Sciatic nerve (tissue), 2 donors: ENCODE measurements at regions of chr2 and their contacts with region 1.

Region 1: DNA sequence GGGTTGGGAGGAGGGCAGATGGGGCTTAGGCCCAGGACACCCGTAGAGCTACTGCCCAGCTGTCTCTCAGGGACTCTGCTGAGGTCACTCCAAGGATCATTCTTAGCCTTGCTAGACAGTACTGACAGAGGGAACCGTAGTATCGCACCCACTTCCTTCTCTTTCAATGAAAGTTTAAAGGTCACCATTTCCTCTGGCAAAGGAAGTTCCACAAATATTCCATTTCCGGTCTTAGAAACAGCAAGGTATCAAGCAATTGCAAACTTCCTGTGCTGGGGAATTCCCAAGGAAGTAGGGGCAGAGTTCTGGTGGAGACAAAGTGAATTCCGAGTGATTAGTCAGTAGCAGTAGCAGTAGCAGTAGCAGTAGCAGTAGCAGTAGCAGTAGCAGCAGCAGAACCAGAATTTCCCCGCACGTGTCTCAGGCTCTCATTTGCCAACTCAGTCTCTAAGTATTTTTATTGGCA is 24.7 kb downstream of the IL1B start:
- DNase-seq: no peak
- ATAC-seq: peak; percentile 45

Region 2: GRCh38 chr2:112782234-112782799 is 29.6 kb before region 1 on chr2:
- intact Hi-C with region 1: loop called (anchors 1 kb)
- DNase-seq: no peak
- ATAC-seq: no peak

Region 3: GRCh38 chr2:113848758-113849415 is 1037.0 kb after region 1 on chr2:
- intact Hi-C with region 1: no loop called
- DNase-seq: no peak
- ATAC-seq: no peak